Left lung (tissue), 14 donors: ENCODE measurements at regions of chr20 and their contacts with region 1.

Region 1: DNA sequence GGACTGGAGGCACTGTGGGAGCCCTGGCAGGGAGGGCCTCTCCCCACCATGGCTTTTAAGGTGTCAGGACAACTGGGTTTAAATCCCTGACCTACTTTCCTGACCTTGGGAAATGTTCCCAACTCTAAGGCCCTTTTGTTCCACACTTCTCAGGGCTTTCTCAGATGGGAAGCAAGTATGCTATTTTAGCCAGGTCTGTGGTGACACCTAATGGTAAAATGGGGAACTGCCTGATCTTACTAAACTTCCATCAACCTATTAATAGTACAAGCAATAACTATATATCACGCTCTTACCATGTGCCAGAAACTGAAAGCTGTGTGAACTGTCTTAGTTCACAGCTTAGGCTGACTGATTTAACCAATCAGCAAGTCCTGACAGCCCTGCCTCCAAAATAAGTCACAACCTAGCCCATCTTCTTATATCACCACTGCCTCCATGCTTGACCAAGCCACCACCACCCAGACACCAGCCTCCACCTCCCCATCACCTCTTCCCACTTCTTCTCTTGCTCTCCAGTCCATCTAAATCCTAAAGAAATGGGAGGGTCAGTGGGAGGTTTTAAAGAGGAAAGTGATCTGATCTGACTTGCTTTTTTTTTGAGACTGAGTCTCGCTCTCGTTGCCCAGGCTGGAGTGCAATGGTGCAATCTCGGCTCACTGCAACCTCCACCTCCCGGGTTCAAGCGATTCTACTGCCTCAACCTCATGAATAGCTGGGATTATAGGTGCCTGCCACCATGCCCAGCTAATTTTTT is 6.9 kb upstream of the BLCAP start:
- DNase-seq: peak in 2 of 4 donors; percentile 81 to 85
- ATAC-seq: peak; percentile 96
- H3K4me3 ChIP-seq: no peak overlapping the region
- H3K27ac ChIP-seq: no peak overlapping the region
- H3K4me1 ChIP-seq: peaks cover 0 to 5% of the 10 kb centered on the region in 2 donors
- H3K27me3 ChIP-seq: no peaks in the 10 kb centered on the region
- CTCF ChIP-seq: peak; percentile 73 to 82

Region 2: GRCh38 chr20:37192137-37192854 is 342.3 kb before region 1 on chr20:
- intact Hi-C with region 1: loop called (anchors 5 to 10 kb)
- DNase-seq: peak; percentile 84 to 92 (median 87)
- ATAC-seq: peak; percentile 97
- H3K4me3 ChIP-seq: no peak overlapping the region
- H3K27ac ChIP-seq: no peak overlapping the region
- H3K4me1 ChIP-seq: peaks cover 0 to 61% of the 10 kb centered on the region in 2 donors
- H3K27me3 ChIP-seq: no peaks in the 10 kb centered on the region
- CTCF ChIP-seq: peak; percentile 84 to 90

Region 3: GRCh38 chr20:37265152-37265551 is 269.4 kb before region 1 on chr20:
- intact Hi-C with region 1: loop called in 1 of 2 experiments (anchors 5 kb)
- DNase-seq: no peak
- ATAC-seq: peak; percentile 27
- H3K4me3 ChIP-seq: no peak overlapping the region
- H3K27ac ChIP-seq: no peak overlapping the region
- H3K4me1 ChIP-seq: peaks cover 0 to 9% of the 10 kb centered on the region in 2 donors
- H3K27me3 ChIP-seq: peaks cover 0 to 17% of the 10 kb centered on the region in 2 donors
- CTCF ChIP-seq: no peak